ENCODE measurements at regions of chr17 and their contacts with region 1.

Region 1: DNA sequence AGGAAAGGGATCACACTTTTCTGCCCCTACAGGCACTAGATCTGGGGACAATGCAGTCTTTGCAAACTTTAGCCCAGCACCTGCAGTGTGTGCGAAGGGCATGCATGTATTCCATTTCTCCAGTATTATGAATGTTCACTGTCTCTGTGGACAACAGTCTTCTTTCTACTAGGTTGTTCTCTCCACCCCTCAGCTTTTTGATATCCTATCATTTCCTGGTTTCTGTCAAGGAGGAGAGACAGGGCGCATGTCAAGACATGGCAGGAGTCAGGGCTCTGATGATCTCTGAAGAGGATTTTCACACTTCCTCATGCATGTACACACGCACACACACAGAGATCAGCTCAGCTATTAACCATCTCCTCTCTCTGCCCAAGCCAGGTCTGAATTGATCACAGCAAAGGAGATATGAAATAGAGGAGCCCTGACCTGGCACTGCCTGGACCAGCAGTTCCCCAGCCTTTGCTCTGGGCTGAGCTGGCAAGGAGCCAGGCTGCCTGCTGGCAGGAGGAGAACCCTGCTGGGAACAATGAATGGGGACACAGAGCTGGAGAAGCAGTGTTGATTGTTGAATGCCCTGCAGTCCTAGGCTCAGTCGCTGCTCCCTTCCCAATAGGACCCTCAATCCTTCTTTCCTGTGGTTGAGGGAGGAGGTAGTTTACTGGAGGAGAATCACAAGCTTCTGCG is 2.6 kb downstream of the GPR179 start:
- DNase-seq: peak in 1 of 2 experiments; percentile 62
- H3K4me3 ChIP-seq: no peak overlapping the region
- H3K27ac ChIP-seq: no peak overlapping the region
- H3K4me1 ChIP-seq: no peaks in the 10 kb centered on the region
- H3K27me3 ChIP-seq: peaks cover 16% of the 10 kb centered on the region; the same call in 1 of the 2 replicates
- CTCF ChIP-seq: no peak

Region 2: GRCh38 chr17:37585066-37585465 is 756.1 kb before region 1 on chr17:
- CTCF ChIA-PET with region 1: no interaction called
- POLR2A ChIA-PET with region 1: interaction called, 10 read pairs
- intact Hi-C with region 1: no loop called
- DNase-seq: no peak
- H3K4me3 ChIP-seq: no peak overlapping the region
- H3K27ac ChIP-seq: no peak overlapping the region
- H3K4me1 ChIP-seq: no peaks in the 10 kb centered on the region
- H3K27me3 ChIP-seq: no peaks in the 10 kb centered on the region
- CTCF ChIP-seq: no peak

Region 3: GRCh38 chr17:38379438-38379837 is 38.3 kb after region 1 on chr17:
- CTCF ChIA-PET with region 1: interaction called, 13 read pairs
- POLR2A ChIA-PET with region 1: no interaction called
- intact Hi-C with region 1: no loop called
- DNase-seq: peak in 1 of 2 experiments; percentile 62
- H3K4me3 ChIP-seq: no peak overlapping the region
- H3K27ac ChIP-seq: 0 out of 2 replicates have a peak overlapping the region, but pooled peaks have one; percentile 7
- H3K4me1 ChIP-seq: no peaks in the 10 kb centered on the region
- H3K27me3 ChIP-seq: no peaks in the 10 kb centered on the region
- CTCF ChIP-seq: no peak

Measured in PC-9 (cell line).